Lower leg skin (tissue), 4 donors: ENCODE measurements at regions of chr18 and their contacts with region 1.

Region 1: DNA sequence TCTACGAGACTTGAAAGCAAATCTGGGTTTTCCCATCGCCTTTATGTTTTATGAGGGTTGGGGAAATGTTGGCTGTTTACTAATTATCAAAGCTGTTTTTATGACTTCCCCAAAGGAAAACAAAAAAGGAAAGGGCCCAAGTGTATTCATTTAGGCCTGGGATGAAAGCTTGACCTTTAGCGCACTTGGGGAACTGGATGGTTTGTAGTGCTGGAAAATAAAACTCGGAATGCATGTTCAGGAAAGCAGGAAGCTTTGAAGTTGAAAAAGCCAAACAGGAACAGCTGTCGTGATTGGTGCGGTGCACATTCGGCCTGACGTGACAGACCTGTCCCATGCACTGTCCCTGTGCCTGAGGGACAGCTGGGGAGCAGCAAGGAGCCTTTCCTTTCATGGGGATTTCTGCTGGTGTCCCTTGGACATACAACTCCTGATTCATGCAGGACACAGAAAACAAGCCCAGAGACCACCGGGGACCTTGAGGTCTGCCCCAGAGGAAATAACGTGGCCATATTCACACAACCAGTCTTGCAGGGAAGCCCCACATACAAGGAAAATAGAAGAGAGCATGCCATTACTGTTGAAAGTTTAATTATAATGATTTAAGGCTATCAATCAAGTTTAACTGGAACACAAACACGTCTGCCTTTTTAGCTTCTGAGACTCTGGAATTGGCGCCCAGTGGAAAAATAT is 169.7 kb upstream of the APCDD1 start:
- DNase-seq: no peak
- H3K4me3 ChIP-seq: no peak overlapping the region
- CTCF ChIP-seq: no peak
- POLR2A ChIP-seq: no peak

Region 2: GRCh38 chr18:9629709-9630108 is 655.0 kb before region 1 on chr18:
- intact Hi-C with region 1: loop called (anchors 5 kb)
- DNase-seq: no peak
- H3K4me3 ChIP-seq: no peak overlapping the region
- CTCF ChIP-seq: no peak
- POLR2A ChIP-seq: no peak

Region 3: DNA sequence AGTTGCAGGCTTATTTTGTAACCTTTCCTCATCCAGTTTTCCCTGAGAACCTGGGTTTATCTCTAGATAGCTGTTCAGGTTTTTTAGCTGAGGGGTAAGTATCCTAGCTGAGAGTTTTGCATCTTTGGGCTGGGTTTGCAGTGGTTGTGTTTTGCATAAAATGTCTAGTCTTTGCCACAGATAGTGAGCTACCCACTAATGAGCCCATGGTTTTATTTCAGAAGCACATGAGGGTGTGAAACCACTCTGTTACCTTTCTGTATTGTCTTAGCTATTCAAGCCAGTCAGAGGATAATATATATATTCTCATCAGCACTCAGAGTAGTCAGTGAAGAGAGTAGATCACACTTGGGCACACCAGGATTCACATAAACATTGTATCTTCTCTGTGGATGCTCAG is 423.6 kb before region 1 on chr18:
- intact Hi-C with region 1: no loop called
- DNase-seq: no peak
- H3K4me3 ChIP-seq: no peak overlapping the region
- CTCF ChIP-seq: no peak
- POLR2A ChIP-seq: no peak